ENCODE measurements at regions of chr17 and their contacts with region 1.

Region 1: GRCh38 chr17:4215882-4216570 is 47.8 kb downstream of the ANKFY1 start:
- DNase-seq: peak; percentile 18
- H3K4me3 ChIP-seq: no peak overlapping the region
- H3K27ac ChIP-seq: peak overlapping the region in 1 of 2 experiments; percentile 18; a peak in 1 of 4 replicates
- H3K4me1 ChIP-seq: peaks cover 8 to 22% of the 10 kb centered on the region in 2 experiments; a peak in 3 of 4 replicates
- H3K27me3 ChIP-seq: no peaks in the 10 kb centered on the region
- CTCF ChIP-seq: no peak
- EP300 ChIP-seq: no peak
- RAD21 ChIP-seq: no peak

Region 2: GRCh38 chr17:4199818-4200402 is 16.1 kb before region 1 on chr17:
- CTCF ChIA-PET with region 1: interaction called, 18 read pairs
- POLR2A ChIA-PET with region 1: no interaction called
- DNase-seq: peak; percentile 77
- H3K4me3 ChIP-seq: no peak overlapping the region
- H3K27ac ChIP-seq: no peak overlapping the region
- H3K4me1 ChIP-seq: peaks cover 0 to 6% of the 10 kb centered on the region in 2 experiments; a peak in 1 of 4 replicates
- H3K27me3 ChIP-seq: no peaks in the 10 kb centered on the region
- CTCF ChIP-seq: peak; percentile 83
- EP300 ChIP-seq: no peak
- RAD21 ChIP-seq: peak; percentile 56

Region 3: DNA sequence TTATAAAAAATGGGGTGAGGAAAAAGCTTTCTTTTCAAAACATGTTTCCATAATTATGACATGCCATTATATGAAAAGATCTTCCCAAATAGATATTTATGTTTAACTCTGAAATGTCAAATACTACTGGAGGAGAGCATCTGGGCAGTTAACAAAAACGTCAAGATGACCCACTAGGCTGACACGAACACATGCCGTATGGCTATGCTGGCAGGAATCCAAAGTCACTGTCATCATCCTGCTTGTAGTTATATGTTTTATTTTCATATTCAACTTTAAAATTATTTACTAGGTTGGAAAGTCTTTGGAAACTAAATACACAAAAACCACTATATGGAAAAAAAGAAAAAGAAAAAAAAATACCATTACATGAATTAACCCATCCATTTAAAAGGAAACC is 20.4 kb after region 1 on chr17:
- CTCF ChIA-PET with region 1: interaction called, 12 read pairs
- POLR2A ChIA-PET with region 1: no interaction called
- DNase-seq: peak; percentile 24
- H3K4me3 ChIP-seq: no peak overlapping the region
- H3K27ac ChIP-seq: peak overlapping the region in 1 of 2 experiments; percentile 98; a peak in 3 of 4 replicates
- H3K4me1 ChIP-seq: peaks cover 3 to 31% of the 10 kb centered on the region in 2 experiments; a peak in 3 of 4 replicates
- H3K27me3 ChIP-seq: no peaks in the 10 kb centered on the region
- CTCF ChIP-seq: no peak
- EP300 ChIP-seq: no peak
- RAD21 ChIP-seq: no peak

Region 4: DNA sequence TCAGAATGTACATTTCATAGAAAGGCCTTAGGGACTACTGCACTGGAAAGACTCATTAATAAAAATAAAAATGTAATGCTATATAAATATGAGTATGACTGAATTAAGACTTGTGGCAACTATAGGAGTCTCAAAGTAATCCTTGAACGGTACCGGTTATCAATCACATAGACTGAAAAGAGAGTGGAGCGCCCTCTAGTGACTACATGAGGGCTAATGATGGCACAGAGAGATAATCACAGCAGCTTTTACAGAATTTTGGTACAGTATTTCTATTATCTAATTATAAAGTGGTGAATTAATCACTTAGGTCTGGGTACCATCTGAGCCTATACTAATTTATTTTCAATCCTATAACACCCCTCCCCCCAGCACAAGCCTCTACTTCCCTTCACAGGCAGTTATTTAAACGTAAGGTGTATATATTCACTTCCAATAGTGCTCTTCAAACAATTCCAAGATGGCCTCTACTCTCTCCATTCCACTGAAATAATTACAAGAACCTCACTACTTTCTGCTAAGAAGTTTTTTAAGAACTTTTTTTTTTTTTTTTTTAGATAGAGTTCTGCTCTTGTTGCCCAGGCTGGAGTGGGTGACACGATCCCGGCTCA is 88.5 kb after region 1 on chr17:
- CTCF ChIA-PET with region 1: interaction called, 29 read pairs
- POLR2A ChIA-PET with region 1: no interaction called
- DNase-seq: peak; percentile 68
- H3K4me3 ChIP-seq: peak overlapping the region in 1 of 2 experiments; percentile 20; a peak in 1 of 4 replicates
- H3K27ac ChIP-seq: 0 out of 4 replicates have a peak overlapping the region, but pooled peaks of 1 of the 2 experiments have one; percentile 8
- H3K4me1 ChIP-seq: no peaks in the 10 kb centered on the region; a peak in 1 of 4 replicates
- H3K27me3 ChIP-seq: no peaks in the 10 kb centered on the region
- CTCF ChIP-seq: peak; percentile 93
- EP300 ChIP-seq: no peak
- RAD21 ChIP-seq: peak; percentile 56

Region 5: DNA sequence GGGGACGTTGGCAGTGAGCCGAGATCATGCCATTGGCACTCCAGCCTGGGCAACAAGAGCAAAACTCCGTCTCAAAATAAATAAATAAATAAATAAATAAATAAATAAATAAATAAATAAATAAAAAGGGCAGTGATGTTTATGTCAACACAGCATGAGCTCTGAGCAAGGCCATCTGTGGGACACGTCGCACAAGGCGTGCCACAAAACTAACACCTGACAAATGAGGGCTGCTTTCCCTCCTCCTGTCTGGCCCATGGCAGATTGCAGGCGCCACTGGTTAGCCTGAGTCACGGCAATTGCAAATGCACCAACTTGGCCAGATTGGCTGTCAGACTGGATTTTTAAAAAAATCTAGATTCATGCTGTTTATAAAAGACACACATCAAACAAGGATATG is 191.8 kb after region 1 on chr17:
- CTCF ChIA-PET with region 1: interaction called, 42 read pairs
- POLR2A ChIA-PET with region 1: no interaction called
- DNase-seq: no peak
- H3K4me3 ChIP-seq: no peak overlapping the region
- H3K27ac ChIP-seq: no peak overlapping the region
- H3K4me1 ChIP-seq: no peaks in the 10 kb centered on the region
- H3K27me3 ChIP-seq: no peaks in the 10 kb centered on the region
- CTCF ChIP-seq: no peak
- EP300 ChIP-seq: no peak
- RAD21 ChIP-seq: no peak

Region 6: GRCh38 chr17:4420692-4421131 is 204.7 kb after region 1 on chr17:
- CTCF ChIA-PET with region 1: interaction called, 42 read pairs
- POLR2A ChIA-PET with region 1: no interaction called
- DNase-seq: peak; percentile 81
- H3K4me3 ChIP-seq: no peak overlapping the region; a peak in 1 of 4 replicates
- H3K27ac ChIP-seq: no peak overlapping the region
- H3K4me1 ChIP-seq: peaks cover 0 to 2% of the 10 kb centered on the region in 2 experiments; a peak in 1 of 4 replicates
- H3K27me3 ChIP-seq: no peaks in the 10 kb centered on the region
- CTCF ChIP-seq: peak; percentile 78
- EP300 ChIP-seq: no peak
- RAD21 ChIP-seq: peak; percentile 91